ENCODE measurements at regions of chr12 and their contacts with region 1.

Region 1: DNA sequence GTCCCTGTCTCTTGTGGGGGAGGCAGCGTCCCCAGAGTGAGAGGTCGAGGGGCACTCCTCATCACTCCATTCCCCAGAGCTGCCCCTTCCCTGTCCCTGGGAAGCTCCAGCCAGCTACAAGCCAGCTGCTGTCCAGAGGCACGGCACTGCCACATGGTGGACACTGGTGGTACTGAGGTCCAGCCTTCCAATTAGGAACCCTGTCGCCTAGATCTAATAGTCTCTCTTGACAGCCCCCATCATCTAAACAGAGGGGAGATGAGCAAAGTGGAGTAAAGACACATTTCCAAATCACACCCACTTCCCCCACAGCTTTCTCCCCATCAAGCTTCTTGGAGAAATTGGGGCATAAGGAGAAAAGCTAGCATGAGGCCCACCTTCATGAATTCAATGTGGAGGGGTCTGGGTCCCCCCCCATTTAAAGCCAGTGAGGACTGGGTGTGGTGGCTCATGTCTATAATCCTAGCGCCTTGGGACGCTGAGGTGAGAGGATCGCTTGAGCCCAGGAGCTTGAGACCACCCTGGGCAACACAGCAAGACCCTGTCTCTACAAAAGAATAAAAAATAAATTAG is 2.1 kb upstream of the INHBE start:
- DNase-seq: peak; percentile 58 to 74 (median 71)
- H3K4me3 ChIP-seq: no peak overlapping the region
- H3K4me3 Mint-ChIP-seq: no peak overlapping the region
- H3K27ac ChIP-seq: no peak overlapping the region
- H3K27ac Mint-ChIP-seq: peak overlapping the region in 2 of 7 donors; percentile 23 to 36
- H3K4me1 ChIP-seq: peaks cover 5 to 11% of the 10 kb centered on the region in 2 donors
- H3K4me1 Mint-ChIP-seq: peaks cover 15% of the 10 kb centered on the region
- H3K27me3 ChIP-seq: no peaks in the 10 kb centered on the region
- H3K27me3 Mint-ChIP-seq: peaks cover 6 to 15% (median 7%) of the 10 kb centered on the region in 3 donors
- CTCF ChIP-seq: peak; percentile 82

Region 2: GRCh38 chr12:57261428-57261865 is 191.6 kb before region 1 on chr12:
- intact Hi-C with region 1: loop called (anchors 5 kb)
- DNase-seq: no peak
- H3K4me3 ChIP-seq: no peak overlapping the region
- H3K4me3 Mint-ChIP-seq: no peak overlapping the region
- H3K27ac ChIP-seq: no peak overlapping the region
- H3K27ac Mint-ChIP-seq: peak overlapping the region in 1 of 7 donors; percentile 26
- H3K4me1 ChIP-seq: no peaks in the 10 kb centered on the region
- H3K4me1 Mint-ChIP-seq: peaks cover 2% of the 10 kb centered on the region
- H3K27me3 ChIP-seq: no peaks in the 10 kb centered on the region
- H3K27me3 Mint-ChIP-seq: no peaks in the 10 kb centered on the region
- CTCF ChIP-seq: no peak

Region 3: DNA sequence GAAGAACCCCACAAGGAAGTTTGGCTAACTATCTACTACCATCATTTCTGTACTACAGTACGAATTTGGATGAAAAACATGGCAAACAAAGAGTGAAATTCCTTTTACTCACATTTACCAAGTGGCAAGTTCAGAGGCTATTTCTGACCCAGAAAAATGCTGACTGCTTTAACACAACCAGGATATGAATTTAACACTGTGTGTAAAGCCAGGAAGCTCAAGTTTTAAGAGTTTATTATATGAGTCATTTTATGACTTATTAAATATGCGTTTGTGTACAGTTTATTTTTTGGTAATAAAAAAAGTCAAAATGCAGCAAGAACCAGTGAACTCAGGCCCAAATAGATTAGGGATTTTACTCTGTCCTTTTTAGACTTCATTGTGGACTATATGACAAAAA is 143.6 kb before region 1 on chr12:
- intact Hi-C with region 1: loop called (anchors 5 to 10 kb)
- DNase-seq: no peak
- H3K4me3 ChIP-seq: no peak overlapping the region
- H3K4me3 Mint-ChIP-seq: no peak overlapping the region
- H3K27ac ChIP-seq: no peak overlapping the region
- H3K27ac Mint-ChIP-seq: peak overlapping the region in 1 of 7 donors; percentile 74
- H3K4me1 ChIP-seq: no peaks in the 10 kb centered on the region
- H3K4me1 Mint-ChIP-seq: no peaks in the 10 kb centered on the region
- H3K27me3 ChIP-seq: no peaks in the 10 kb centered on the region
- H3K27me3 Mint-ChIP-seq: no peaks in the 10 kb centered on the region
- CTCF ChIP-seq: no peak

Measured in CD14-positive monocyte (primary cell).